CD8-positive, alpha-beta T cell (primary cell): ENCODE measurements at regions of chr4 and their contacts with region 1.

Region 1: GRCh38 chr4:185203486-185204237 is at the start of gene CFAP97:
- DNase-seq: peak; percentile 67 to 95 (median 82)
- ATAC-seq: peak; percentile 79
- H3K4me3 ChIP-seq: peak within 1 kb of the TSS; percentile 64 to 83
- H3K4me3 Mint-ChIP-seq: peak within 1 kb of the TSS; percentile 91
- H3K27ac ChIP-seq: peak within 1 kb of the TSS; percentile 83 to 87
- H3K27ac Mint-ChIP-seq: peak within 1 kb of the TSS; percentile 98
- H3K4me1 ChIP-seq: peaks cover 29% of the 10 kb centered on the region
- H3K4me1 Mint-ChIP-seq: peaks cover 49% of the 10 kb centered on the region
- H3K27me3 ChIP-seq: no peaks in the 10 kb centered on the region
- H3K27me3 Mint-ChIP-seq: no peaks in the 10 kb centered on the region
- CTCF ChIP-seq: no peak
- total RNA-seq, gene CFAP97: 18.8 to 20.4 TPM

Region 2: GRCh38 chr4:183444214-183445066 is 1759.2 kb before region 1 on chr4 and contains the start of gene CDKN2AIP:
- CTCF ChIA-PET with region 1: no interaction called
- POLR2A ChIA-PET with region 1: no interaction called
- intact Hi-C with region 1: loop called in 1 of 2 experiments (anchors 2 kb)
- DNase-seq: peak; percentile 90 to 98 (median 93)
- ATAC-seq: peak; percentile 85
- H3K4me3 ChIP-seq: peak within 1 kb of the TSS; percentile 84 to 92
- H3K4me3 Mint-ChIP-seq: peak within 1 kb of the TSS; percentile 98
- H3K27ac ChIP-seq: peak within 1 kb of the TSS; percentile 84 to 91
- H3K27ac Mint-ChIP-seq: peak within 1 kb of the TSS; percentile 99
- H3K4me1 ChIP-seq: peaks cover 43% of the 10 kb centered on the region
- H3K4me1 Mint-ChIP-seq: peaks cover 59% of the 10 kb centered on the region
- H3K27me3 ChIP-seq: no peaks in the 10 kb centered on the region
- H3K27me3 Mint-ChIP-seq: no peaks in the 10 kb centered on the region
- CTCF ChIP-seq: no peak
- total RNA-seq, gene CDKN2AIP: 51.2 to 51.9 TPM

Region 3: GRCh38 chr4:184474263-184475095 is 729.2 kb before region 1 on chr4 and contains the start of gene IRF2:
- CTCF ChIA-PET with region 1: no interaction called
- POLR2A ChIA-PET with region 1: no interaction called
- intact Hi-C with region 1: loop called in 1 of 2 experiments (anchors 5 kb)
- DNase-seq: peak; percentile 91 to 99 (median 95)
- ATAC-seq: peak; percentile 82
- H3K4me3 ChIP-seq: peak within 1 kb of the TSS; percentile 78 to 93
- H3K4me3 Mint-ChIP-seq: peak within 1 kb of the TSS; percentile 98
- H3K27ac ChIP-seq: peak within 1 kb of the TSS; percentile 94 to 95
- H3K27ac Mint-ChIP-seq: peak within 1 kb of the TSS; percentile 99
- H3K4me1 ChIP-seq: peaks cover 38% of the 10 kb centered on the region
- H3K4me1 Mint-ChIP-seq: peaks cover 67% of the 10 kb centered on the region
- H3K27me3 ChIP-seq: no peaks in the 10 kb centered on the region
- H3K27me3 Mint-ChIP-seq: no peaks in the 10 kb centered on the region
- CTCF ChIP-seq: no peak
- total RNA-seq, gene IRF2: 7.9 to 9.3 TPM

Region 4: GRCh38 chr4:185165605-185166063 is 38.0 kb before region 1 on chr4:
- CTCF ChIA-PET with region 1: no interaction called
- POLR2A ChIA-PET with region 1: no interaction called
- intact Hi-C with region 1: loop called in 1 of 2 experiments (anchors 1 kb)
- DNase-seq: peak in 3 of 9 experiments; percentile 7 to 75 (median 57)
- ATAC-seq: peak; percentile 77
- H3K4me3 ChIP-seq: no peak overlapping the region
- H3K4me3 Mint-ChIP-seq: peak overlapping the region; percentile 5
- H3K27ac ChIP-seq: no peak overlapping the region
- H3K27ac Mint-ChIP-seq: no peak overlapping the region
- H3K4me1 ChIP-seq: peaks cover 19% of the 10 kb centered on the region
- H3K4me1 Mint-ChIP-seq: peaks cover 18% of the 10 kb centered on the region
- H3K27me3 ChIP-seq: no peaks in the 10 kb centered on the region
- H3K27me3 Mint-ChIP-seq: peaks cover 3% of the 10 kb centered on the region
- CTCF ChIP-seq: no peak

Region 5: GRCh38 chr4:185192059-185192458 is 11.6 kb before region 1 on chr4:
- CTCF ChIA-PET with region 1: no interaction called
- POLR2A ChIA-PET with region 1: no interaction called
- intact Hi-C with region 1: no loop called
- DNase-seq: no peak
- ATAC-seq: no peak
- H3K4me3 ChIP-seq: no peak overlapping the region
- H3K4me3 Mint-ChIP-seq: no peak overlapping the region
- H3K27ac ChIP-seq: no peak overlapping the region
- H3K27ac Mint-ChIP-seq: no peak overlapping the region
- H3K4me1 ChIP-seq: peaks cover 5% of the 10 kb centered on the region
- H3K4me1 Mint-ChIP-seq: peaks cover 43% of the 10 kb centered on the region
- H3K27me3 ChIP-seq: no peaks in the 10 kb centered on the region
- H3K27me3 Mint-ChIP-seq: no peaks in the 10 kb centered on the region
- CTCF ChIP-seq: no peak

Region 6: GRCh38 chr4:185395956-185396723 is 192.5 kb after region 1 on chr4:
- CTCF ChIA-PET with region 1: no interaction called
- POLR2A ChIA-PET with region 1: interaction called, 4 read pairs
- intact Hi-C with region 1: loop called (anchors 1 to 2 kb)
- DNase-seq: peak; percentile 91 to 98 (median 95)
- ATAC-seq: peak; percentile 92
- H3K4me3 ChIP-seq: peak overlapping the region; percentile 73 to 95
- H3K4me3 Mint-ChIP-seq: peak overlapping the region; percentile 95
- H3K27ac ChIP-seq: peak overlapping the region; percentile 98 to 99
- H3K27ac Mint-ChIP-seq: peak overlapping the region; percentile 99
- H3K4me1 ChIP-seq: peaks cover 16% of the 10 kb centered on the region
- H3K4me1 Mint-ChIP-seq: peaks cover 20% of the 10 kb centered on the region
- H3K27me3 ChIP-seq: no peaks in the 10 kb centered on the region
- H3K27me3 Mint-ChIP-seq: no peaks in the 10 kb centered on the region
- CTCF ChIP-seq: no peak

Region 7: GRCh38 chr4:186037692-186038658 is 834.3 kb after region 1 on chr4:
- CTCF ChIA-PET with region 1: no interaction called
- POLR2A ChIA-PET with region 1: no interaction called
- intact Hi-C with region 1: no loop called
- DNase-seq: peak in 2 of 9 experiments; percentile 62 to 63
- ATAC-seq: no peak
- H3K4me3 ChIP-seq: no peak overlapping the region
- H3K4me3 Mint-ChIP-seq: no peak overlapping the region
- H3K27ac ChIP-seq: no peak overlapping the region
- H3K27ac Mint-ChIP-seq: no peak overlapping the region
- H3K4me1 ChIP-seq: no peaks in the 10 kb centered on the region
- H3K4me1 Mint-ChIP-seq: no peaks in the 10 kb centered on the region
- H3K27me3 ChIP-seq: no peaks in the 10 kb centered on the region
- H3K27me3 Mint-ChIP-seq: peaks cover 27% of the 10 kb centered on the region
- CTCF ChIP-seq: peak; percentile 63

Region 8: GRCh38 chr4:186191200-186192065 is 987.8 kb after region 1 on chr4 and contains the start of gene CYP4V2:
- CTCF ChIA-PET with region 1: no interaction called
- POLR2A ChIA-PET with region 1: no interaction called
- intact Hi-C with region 1: loop called in 1 of 2 experiments (anchors 10 kb)
- DNase-seq: peak; percentile 64 to 92 (median 85)
- ATAC-seq: peak; percentile 80
- H3K4me3 ChIP-seq: peak within 1 kb of the TSS; percentile 73 to 85
- H3K4me3 Mint-ChIP-seq: peak within 1 kb of the TSS; percentile 90
- H3K27ac ChIP-seq: peak within 1 kb of the TSS; percentile 89 to 91
- H3K27ac Mint-ChIP-seq: peak within 1 kb of the TSS; percentile 98
- H3K4me1 ChIP-seq: peaks cover 25% of the 10 kb centered on the region
- H3K4me1 Mint-ChIP-seq: peaks cover 57% of the 10 kb centered on the region
- H3K27me3 ChIP-seq: no peaks in the 10 kb centered on the region
- H3K27me3 Mint-ChIP-seq: no peaks in the 10 kb centered on the region
- CTCF ChIP-seq: no peak
- total RNA-seq, gene CYP4V2: 7.9 to 9.9 TPM